ENCODE measurements at regions of chr3 and their contacts with region 1.

Region 1: DNA sequence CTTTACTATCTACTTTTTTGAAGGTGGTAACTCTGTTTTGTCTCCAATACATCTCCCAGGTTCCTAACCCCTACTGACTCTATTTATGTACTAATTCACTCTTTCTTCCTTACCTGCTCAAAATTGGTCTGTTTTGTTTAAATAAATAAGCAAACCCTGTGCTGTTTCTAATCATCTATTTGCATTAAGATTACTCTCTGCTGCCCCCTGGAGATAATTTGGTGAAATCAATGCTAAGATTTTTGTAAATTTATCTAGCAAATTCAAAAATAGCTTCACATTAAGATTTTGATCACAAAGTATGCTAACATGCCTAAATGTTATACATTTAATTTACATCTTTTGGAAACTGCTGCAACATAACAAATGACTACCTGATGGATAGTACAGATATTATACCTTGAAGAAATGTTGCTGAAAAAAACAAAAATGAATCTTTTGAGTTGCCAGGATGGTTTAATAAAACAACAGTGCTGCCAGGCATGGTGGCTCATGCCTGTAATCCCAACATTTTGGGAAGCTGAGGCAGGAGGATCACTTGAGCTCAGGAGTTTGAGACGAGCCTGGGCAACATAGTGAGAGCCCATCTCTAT is 4.4 kb upstream of the CD200R1 start:
- DNase-seq: peak in 6 of 35 experiments; percentile 19 to 76 (median 30)
- ATAC-seq: no peak
- H3K4me3 ChIP-seq: no peak overlapping the region
- H3K4me3 Mint-ChIP-seq: no peak overlapping the region
- H3K27ac ChIP-seq: no peak overlapping the region
- H3K27ac Mint-ChIP-seq: peak overlapping the region in 1 of 2 donors; percentile 8
- H3K4me1 ChIP-seq: peaks cover 31 to 53% of the 10 kb centered on the region in 2 experiments
- H3K4me1 Mint-ChIP-seq: peaks cover 66 to 75% (median 69%) of the 10 kb centered on the region in 3 donors
- H3K27me3 ChIP-seq: no peaks in the 10 kb centered on the region
- H3K27me3 Mint-ChIP-seq: no peaks in the 10 kb centered on the region

Region 2: DNA sequence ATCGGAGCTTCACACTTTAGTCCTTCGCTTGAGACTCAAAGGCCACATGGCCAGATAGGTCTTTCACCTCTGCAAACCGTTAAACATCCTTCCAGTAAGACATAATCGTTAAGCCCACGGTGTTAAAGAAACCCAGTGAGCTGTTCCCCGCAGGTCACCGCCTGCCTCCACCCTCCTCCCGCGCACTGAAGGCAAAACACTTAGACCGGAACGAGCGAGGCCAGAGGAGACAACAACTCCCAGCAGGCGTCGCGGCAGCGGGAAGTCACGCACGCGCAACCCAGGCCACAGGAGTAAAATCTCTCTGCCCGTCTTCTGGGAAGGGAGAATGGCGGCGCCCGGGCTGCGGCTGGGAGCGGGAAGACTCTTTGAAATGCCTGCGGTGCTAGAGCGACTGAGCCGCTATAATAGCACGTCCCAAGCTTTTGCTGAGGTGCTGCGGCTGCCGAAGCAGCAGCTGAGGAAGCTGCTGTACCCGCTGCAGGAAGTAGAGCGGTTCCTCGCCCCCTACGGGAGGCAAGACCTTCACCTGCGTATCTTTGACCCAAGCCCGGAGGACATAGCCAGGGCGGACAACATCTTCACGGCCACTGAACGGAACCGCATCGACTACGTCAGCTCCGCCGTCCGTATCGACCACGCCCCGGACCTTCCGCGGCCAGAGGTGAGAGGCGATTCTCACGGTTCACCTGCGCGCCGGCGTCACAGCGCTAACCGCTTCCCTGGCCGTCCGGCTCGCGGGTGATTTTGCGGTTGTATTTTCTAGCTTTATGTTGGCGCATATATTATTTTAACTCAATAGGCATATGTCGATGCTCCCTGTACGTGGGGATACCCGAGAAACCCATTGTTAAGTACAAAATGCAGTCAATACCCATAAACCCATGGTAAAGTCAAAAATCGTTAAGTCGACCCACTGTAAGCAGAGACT is 11.6 kb after region 1 on chr3 and contains the start of gene GTPBP8:
- CTCF ChIA-PET with region 1: interaction called, 4 to 20 read pairs
- POLR2A ChIA-PET with region 1: interaction called in 1 of 2 experiments, 11 read pairs
- DNase-seq: peak; percentile 58 to 91 (median 74)
- ATAC-seq: peak; percentile 89 to 95 (median 94)
- H3K4me3 ChIP-seq: peak within 1 kb of the TSS; percentile 84 to 99
- H3K4me3 Mint-ChIP-seq: peak within 1 kb of the TSS; percentile 90 to 96 (median 92)
- H3K27ac ChIP-seq: peak within 1 kb of the TSS; percentile 94
- H3K27ac Mint-ChIP-seq: peak within 1 kb of the TSS; percentile 90 to 98
- H3K4me1 ChIP-seq: peaks cover 19 to 32% of the 10 kb centered on the region in 2 experiments
- H3K4me1 Mint-ChIP-seq: peaks cover 57 to 74% (median 70%) of the 10 kb centered on the region in 3 donors
- H3K27me3 ChIP-seq: no peaks in the 10 kb centered on the region
- H3K27me3 Mint-ChIP-seq: no peaks in the 10 kb centered on the region
- total RNA-seq, gene GTPBP8: 17.2 to 31.3 (median 27.5) TPM